PC-3 (cell line): ENCODE measurements at regions of chr10 and their contacts with region 1.

Region 1: GRCh38 chr10:91389636-91390512 is 20.3 kb upstream of the HECTD2 start:
- DNase-seq: peak; percentile 71
- ATAC-seq: peak; percentile 80
- H3K4me3 ChIP-seq: peak overlapping the region; percentile 41; the same call in 1 of the 2 replicates
- H3K27ac ChIP-seq: no peak overlapping the region
- H3K4me1 ChIP-seq: no peaks in the 10 kb centered on the region
- H3K27me3 ChIP-seq: no peaks in the 10 kb centered on the region; the same call in 1 of the 2 replicates
- CTCF ChIP-seq: peak; percentile 62

Region 2: DNA sequence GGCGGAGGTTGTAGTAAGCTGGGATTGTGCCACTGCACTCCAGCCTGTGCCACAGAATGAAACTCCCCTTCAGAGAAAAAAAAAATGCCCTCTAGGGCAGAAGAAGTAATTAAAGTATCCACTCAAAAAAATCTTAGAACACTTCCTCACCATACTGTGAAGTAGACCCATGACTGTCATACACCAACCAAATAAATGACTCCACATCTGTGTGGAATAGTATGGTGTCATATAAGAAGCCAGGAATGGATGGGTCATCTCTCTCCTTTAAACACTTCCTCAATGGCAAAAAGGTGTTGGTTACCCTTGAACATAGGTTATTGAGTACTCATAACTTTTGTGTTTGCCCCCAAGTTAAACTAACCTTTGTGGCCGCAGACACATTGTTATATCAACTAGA is 217.5 kb before region 1 on chr10:
- CTCF ChIA-PET with region 1: no interaction called
- POLR2A ChIA-PET with region 1: no interaction called
- intact Hi-C with region 1: no loop called
- DNase-seq: no peak
- ATAC-seq: no peak
- H3K4me3 ChIP-seq: no peak overlapping the region
- H3K27ac ChIP-seq: no peak overlapping the region
- H3K4me1 ChIP-seq: no peaks in the 10 kb centered on the region
- H3K27me3 ChIP-seq: no peaks in the 10 kb centered on the region
- CTCF ChIP-seq: no peak

Region 3: GRCh38 chr10:91551856-91552255 is 162.0 kb after region 1 on chr10:
- CTCF ChIA-PET with region 1: no interaction called
- POLR2A ChIA-PET with region 1: no interaction called
- intact Hi-C with region 1: loop called (anchors 1 kb)
- DNase-seq: peak; percentile 40
- ATAC-seq: peak; percentile 90
- H3K4me3 ChIP-seq: no peak overlapping the region
- H3K27ac ChIP-seq: no peak overlapping the region
- H3K4me1 ChIP-seq: 0 out of 2 replicates have a peak, but pooled peaks cover 4% of the 10 kb centered on the region
- H3K27me3 ChIP-seq: no peaks in the 10 kb centered on the region
- CTCF ChIP-seq: peak; percentile 78